K562 (cell line): ENCODE measurements at regions of chr19 and their contacts with region 1.

Region 1: DNA sequence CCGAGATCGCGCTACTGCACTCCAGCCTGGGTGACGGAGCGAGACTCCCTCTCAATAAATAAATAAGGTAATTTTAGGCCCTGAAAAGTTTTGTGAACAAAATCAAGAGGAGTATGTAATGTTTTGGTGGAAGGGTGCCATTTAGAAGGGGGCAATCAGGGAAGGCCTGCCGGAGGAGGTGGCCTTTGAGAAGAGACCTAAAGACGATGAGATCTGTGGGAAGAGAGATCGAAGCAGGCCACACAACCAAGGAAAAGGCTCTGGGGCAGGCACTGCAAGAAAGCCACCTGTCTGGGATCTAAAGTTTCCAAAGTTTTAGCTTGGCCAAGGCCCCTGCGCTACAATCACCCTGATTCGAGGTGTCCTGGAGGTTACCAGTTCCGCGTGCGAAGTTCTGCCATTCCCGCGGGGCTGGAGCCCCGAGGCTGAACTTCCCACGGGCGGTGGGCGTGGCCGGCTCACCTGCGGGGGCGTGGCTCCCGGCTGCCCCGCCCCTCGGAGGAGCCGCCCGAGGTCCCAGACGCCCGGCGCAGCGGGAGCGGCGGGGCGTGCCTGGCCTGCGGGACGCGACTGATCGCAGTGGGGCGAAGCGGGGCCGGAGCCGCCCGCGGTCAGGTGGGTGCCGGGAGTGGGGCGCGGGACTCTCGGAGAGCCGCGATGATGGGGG is at the start of gene KLC3:
- DNase-seq: peak; percentile 71 to 96 (median 92)
- ATAC-seq: peak; percentile 84
- H3K4me3 ChIP-seq: peak within 1 kb of the TSS; percentile 42
- H3K27ac ChIP-seq: no peak within 1 kb of the TSS
- H3K4me1 ChIP-seq: peaks cover 7 to 37% of the 10 kb centered on the region in 2 experiments; a peak in 4 of 5 replicates
- H3K27me3 ChIP-seq: peaks cover 8 to 13% of the 10 kb centered on the region in 2 experiments; a peak in 3 of 5 replicates
- CTCF ChIP-seq: no peak
- EP300 ChIP-seq: no peak
- POLR2A ChIP-seq: no peak
- RAD21 ChIP-seq: no peak
- polyA plus RNA-seq, gene KLC3: 0.03 TPM in 1 of 2 experiments, not detected in the other

Region 2: DNA sequence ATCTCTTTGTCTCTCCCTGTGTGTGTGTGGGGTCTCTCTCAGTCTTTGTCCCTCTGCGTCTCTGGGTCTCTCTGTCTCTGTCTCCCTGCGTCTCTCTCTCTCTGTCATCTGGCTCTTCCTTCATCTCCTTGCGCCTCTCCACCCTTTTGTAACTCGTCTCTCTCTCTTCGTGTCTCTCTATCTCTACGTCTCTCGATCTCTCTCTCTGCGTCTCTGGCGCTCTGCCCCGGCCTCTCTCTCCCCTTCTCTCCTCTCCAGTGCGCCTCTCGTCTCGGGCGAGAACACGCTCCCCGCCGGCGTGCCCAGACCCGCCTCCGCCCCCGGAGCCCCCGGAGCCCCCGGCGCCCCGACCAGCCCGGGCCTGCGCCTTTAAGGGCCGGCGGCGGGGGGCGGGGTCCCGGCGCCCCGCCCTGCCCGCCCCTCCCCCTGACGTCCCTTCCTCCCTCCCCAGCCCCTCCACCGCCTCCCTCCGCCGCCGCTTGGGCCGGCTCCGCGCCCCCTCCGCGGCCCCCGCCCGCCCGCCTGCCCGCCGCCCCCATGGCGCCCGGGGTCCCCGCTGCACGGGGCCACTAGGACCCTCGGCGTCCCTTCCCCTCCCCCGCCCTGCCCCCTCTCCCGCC is 89.4 kb before region 1 on chr19 and contains the start of gene MARK4:
- CTCF ChIA-PET with region 1: no interaction called
- POLR2A ChIA-PET with region 1: no interaction called
- in situ Hi-C with region 1: no loop called
- intact Hi-C with region 1: loop called (anchors 1 kb)
- DNase-seq: peak; percentile 74 to 96 (median 96)
- ATAC-seq: peak; percentile 73
- H3K4me3 ChIP-seq: peak within 1 kb of the TSS; percentile 65
- H3K27ac ChIP-seq: peak within 1 kb of the TSS; percentile 68; the same call in 2 of the 3 replicates
- H3K4me1 ChIP-seq: peaks cover 23 to 55% of the 10 kb centered on the region in 2 experiments
- H3K27me3 ChIP-seq: no peaks in the 10 kb centered on the region
- CTCF ChIP-seq: no peak
- EP300 ChIP-seq: no peak
- POLR2A ChIP-seq: peak; percentile 49; the same call in 1 of the 2 replicates
- RAD21 ChIP-seq: no peak
- polyA plus RNA-seq, gene MARK4: 0.52 to 0.96 TPM